Testis (tissue), 5 donors: ENCODE measurements at regions of chr12 and their contacts with region 1.

Region 1: DNA sequence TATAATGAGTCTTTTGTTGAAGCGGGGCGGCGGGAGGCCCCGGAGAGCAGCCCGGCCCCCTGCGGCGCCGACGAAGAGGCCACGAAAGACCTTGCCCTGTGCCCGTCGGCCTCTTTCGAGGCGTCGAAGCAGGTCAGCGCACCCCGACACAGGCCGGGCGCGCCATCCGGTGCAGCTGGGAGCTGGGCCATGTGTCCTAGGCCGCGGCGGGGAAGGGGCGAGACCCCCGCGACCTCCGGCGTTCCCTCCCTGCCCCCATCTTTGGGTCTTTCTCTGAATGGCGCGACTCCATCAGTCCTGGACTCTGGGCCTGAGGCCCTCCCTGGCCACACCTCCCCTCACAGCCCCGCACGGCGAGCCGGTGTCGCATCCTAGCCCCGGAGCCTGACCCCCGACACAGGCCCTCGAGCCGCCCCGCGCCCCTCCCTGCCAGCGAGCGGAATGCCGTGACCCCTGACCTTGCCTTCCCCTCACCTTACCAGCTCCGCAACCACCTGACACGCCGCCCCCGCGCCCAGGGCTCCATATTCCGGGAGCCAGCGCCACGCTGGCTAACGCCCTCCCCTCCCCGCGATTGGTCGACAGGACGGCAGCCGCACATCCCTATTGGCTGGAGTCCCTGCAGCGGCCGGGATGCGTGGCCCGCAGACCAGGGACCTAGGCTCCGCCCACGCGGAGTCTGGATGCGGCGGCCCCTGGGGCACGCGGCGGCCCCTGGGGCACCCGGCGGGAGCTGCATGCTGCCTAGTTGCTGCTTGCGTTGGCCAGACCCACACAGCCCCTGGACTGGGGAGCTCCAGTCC is at the start of gene SLC11A2:
- DNase-seq: peak; percentile 98
- H3K4me3 ChIP-seq: peak within 1 kb of the TSS; percentile 83 to 93
- H3K27ac ChIP-seq: peak within 1 kb of the TSS; percentile 95 to 98
- H3K4me1 ChIP-seq: peaks cover 16% of the 10 kb centered on the region
- H3K27me3 ChIP-seq: no peaks in the 10 kb centered on the region
- CTCF ChIP-seq: peak in 1 of 3 experiments; percentile 23
- POLR2A ChIP-seq: no peak
- total RNA-seq, gene SLC11A2: 63.4 to 66.5 TPM

Region 2: DNA sequence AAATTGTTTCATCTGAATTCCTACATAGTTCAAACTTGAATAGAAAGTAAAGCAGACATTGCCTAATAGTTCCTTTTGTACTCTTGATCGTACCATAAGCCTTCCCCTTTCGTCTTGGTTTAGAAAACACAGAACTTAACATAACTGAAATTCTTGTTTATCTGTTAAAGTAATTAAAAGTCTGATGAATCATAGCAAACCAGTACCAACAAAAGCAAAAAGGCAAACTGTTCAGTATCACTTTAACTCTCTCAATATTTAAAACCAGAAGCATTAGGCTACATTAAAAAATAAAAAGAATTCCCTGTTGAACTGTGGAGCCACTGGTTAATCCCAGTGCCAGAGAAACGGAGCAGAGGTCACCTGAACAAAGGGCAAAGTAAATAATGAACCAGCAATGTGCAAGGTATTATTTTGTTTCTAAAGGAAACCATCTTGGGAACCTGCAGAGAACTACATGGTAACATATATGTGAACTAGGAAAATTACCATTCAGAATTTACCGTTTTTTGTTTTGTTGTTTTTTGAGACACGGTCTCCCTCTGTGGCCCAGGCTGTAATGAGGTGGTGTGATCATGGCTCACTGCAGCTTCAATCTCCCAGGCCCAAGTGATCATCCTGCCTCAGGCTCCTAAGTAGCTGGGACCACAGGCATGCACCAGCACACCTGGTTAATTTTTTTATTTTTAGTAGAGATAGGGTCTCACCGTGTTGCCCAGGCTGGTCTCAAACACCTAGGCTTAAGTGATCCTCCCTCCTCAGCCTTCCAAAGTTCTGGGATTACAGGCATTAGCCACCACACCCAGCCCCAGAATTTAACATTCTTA is 90.8 kb before region 1 on chr12:
- intact Hi-C with region 1: no loop called
- DNase-seq: no peak
- H3K4me3 ChIP-seq: no peak overlapping the region
- H3K27ac ChIP-seq: peak overlapping the region; percentile 46 to 78
- H3K4me1 ChIP-seq: peaks cover 30% of the 10 kb centered on the region
- H3K27me3 ChIP-seq: no peaks in the 10 kb centered on the region
- CTCF ChIP-seq: no peak
- POLR2A ChIP-seq: no peak

Region 3: DNA sequence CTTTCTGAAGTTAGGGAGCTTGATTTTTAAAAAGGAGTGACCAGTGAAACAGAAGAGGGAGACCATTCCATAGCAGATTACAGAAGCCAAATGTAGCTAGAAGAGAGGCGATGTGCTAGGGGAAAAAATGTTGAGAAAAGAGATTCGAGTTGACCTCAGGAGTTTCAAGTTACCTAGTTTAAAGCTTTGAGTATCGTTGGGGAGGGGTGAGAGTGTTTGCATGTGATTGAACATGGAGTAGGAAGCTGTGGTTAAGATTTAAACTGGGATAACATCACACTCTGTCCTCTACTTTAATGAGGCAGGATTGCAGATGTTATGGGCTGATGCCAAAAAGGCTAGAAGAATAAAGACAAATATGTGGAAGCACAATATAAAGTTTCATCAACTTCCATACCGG is 25.8 kb after region 1 on chr12:
- intact Hi-C with region 1: loop called (anchors 2 kb)
- DNase-seq: no peak
- H3K4me3 ChIP-seq: no peak overlapping the region
- H3K27ac ChIP-seq: no peak overlapping the region
- H3K4me1 ChIP-seq: peaks cover 17% of the 10 kb centered on the region
- H3K27me3 ChIP-seq: no peaks in the 10 kb centered on the region
- CTCF ChIP-seq: no peak
- POLR2A ChIP-seq: no peak

Region 4: GRCh38 chr12:51811206-51812202 is 785.5 kb after region 1 on chr12:
- intact Hi-C with region 1: no loop called
- DNase-seq: no peak
- H3K4me3 ChIP-seq: no peak overlapping the region
- H3K27ac ChIP-seq: no peak overlapping the region
- H3K4me1 ChIP-seq: no peaks in the 10 kb centered on the region
- H3K27me3 ChIP-seq: no peaks in the 10 kb centered on the region
- CTCF ChIP-seq: no peak
- POLR2A ChIP-seq: no peak